IMR-90 (cell line): ENCODE measurements at regions of chr3 and their contacts with region 1.

Region 1: GRCh38 chr3:37114251-37115145 is 59.9 kb downstream of the LRRFIP2 start:
- DNase-seq: peak; percentile 95
- ATAC-seq: peak; percentile 72
- H3K4me3 ChIP-seq: no peak overlapping the region
- H3K27ac ChIP-seq: peak overlapping the region; percentile 77; the same call in 1 of the 2 replicates
- H3K4me1 ChIP-seq: peaks cover 16% of the 10 kb centered on the region
- H3K27me3 ChIP-seq: no peaks in the 10 kb centered on the region
- CTCF ChIP-seq: no peak
- POLR2A ChIP-seq: no peak
- RAD21 ChIP-seq: no peak

Region 2: GRCh38 chr3:37072892-37073291 is 41.6 kb before region 1 on chr3:
- CTCF ChIA-PET with region 1: no interaction called
- POLR2A ChIA-PET with region 1: no interaction called
- dilution Hi-C with region 1: no loop called
- in situ Hi-C with region 1: no loop called
- intact Hi-C with region 1: loop called (anchors 5 kb)
- DNase-seq: peak; percentile 93
- ATAC-seq: peak; percentile 61
- H3K4me3 ChIP-seq: peak overlapping the region; percentile 39; the same call in 1 of the 2 replicates
- H3K27ac ChIP-seq: peak overlapping the region; percentile 87
- H3K4me1 ChIP-seq: peaks cover 12% of the 10 kb centered on the region
- H3K27me3 ChIP-seq: no peaks in the 10 kb centered on the region
- CTCF ChIP-seq: no peak
- POLR2A ChIP-seq: no peak
- RAD21 ChIP-seq: no peak

Region 3: GRCh38 chr3:37097776-37098175 is 16.7 kb before region 1 on chr3:
- CTCF ChIA-PET with region 1: no interaction called
- POLR2A ChIA-PET with region 1: no interaction called
- dilution Hi-C with region 1: no loop called
- in situ Hi-C with region 1: no loop called
- intact Hi-C with region 1: no loop called
- DNase-seq: no peak
- ATAC-seq: no peak
- H3K4me3 ChIP-seq: no peak overlapping the region
- H3K27ac ChIP-seq: no peak overlapping the region
- H3K4me1 ChIP-seq: peaks cover 3% of the 10 kb centered on the region; the same call in 1 of the 2 replicates
- H3K27me3 ChIP-seq: no peaks in the 10 kb centered on the region
- CTCF ChIP-seq: no peak
- POLR2A ChIP-seq: no peak
- RAD21 ChIP-seq: no peak

Region 4: DNA sequence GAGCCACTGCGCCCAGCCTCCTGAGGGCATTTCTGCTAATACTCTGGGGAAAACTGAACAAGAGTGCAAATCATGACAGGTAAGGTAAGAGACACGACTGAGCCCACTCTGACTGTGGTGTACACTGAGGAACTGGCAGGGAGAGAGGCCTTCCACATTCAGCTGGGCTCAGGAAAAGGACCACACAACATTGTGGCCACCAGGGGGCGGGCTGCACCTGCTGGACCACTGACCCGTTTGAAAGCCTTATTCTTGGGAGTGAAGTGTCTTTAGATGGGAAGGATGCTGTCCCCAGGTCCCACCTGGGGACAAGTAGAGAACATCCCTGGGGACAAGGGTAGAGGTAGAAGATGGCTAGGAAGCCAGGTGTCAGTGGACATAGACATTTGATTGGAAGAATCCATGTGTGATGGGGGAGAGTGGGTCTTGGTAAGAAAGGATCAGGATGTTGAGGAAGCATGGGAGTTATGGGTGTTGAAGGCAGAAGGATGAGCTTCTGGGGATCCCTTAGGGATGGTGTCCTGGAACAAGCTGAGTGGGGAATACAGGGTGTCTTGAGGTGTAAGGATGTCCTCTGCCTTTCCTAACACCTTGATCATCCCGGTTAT is 741.0 kb after region 1 on chr3:
- CTCF ChIA-PET with region 1: no interaction called
- POLR2A ChIA-PET with region 1: no interaction called
- dilution Hi-C with region 1: no loop called
- in situ Hi-C with region 1: no loop called
- intact Hi-C with region 1: no loop called
- DNase-seq: peak; percentile 63
- ATAC-seq: peak; percentile 59
- H3K4me3 ChIP-seq: no peak overlapping the region
- H3K27ac ChIP-seq: no peak overlapping the region
- H3K4me1 ChIP-seq: peaks cover 9% of the 10 kb centered on the region
- H3K27me3 ChIP-seq: no peaks in the 10 kb centered on the region
- CTCF ChIP-seq: peak; percentile 90
- POLR2A ChIP-seq: no peak
- RAD21 ChIP-seq: peak; percentile 97